ENCODE measurements at regions of chr1 and their contacts with region 1.

Region 1: DNA sequence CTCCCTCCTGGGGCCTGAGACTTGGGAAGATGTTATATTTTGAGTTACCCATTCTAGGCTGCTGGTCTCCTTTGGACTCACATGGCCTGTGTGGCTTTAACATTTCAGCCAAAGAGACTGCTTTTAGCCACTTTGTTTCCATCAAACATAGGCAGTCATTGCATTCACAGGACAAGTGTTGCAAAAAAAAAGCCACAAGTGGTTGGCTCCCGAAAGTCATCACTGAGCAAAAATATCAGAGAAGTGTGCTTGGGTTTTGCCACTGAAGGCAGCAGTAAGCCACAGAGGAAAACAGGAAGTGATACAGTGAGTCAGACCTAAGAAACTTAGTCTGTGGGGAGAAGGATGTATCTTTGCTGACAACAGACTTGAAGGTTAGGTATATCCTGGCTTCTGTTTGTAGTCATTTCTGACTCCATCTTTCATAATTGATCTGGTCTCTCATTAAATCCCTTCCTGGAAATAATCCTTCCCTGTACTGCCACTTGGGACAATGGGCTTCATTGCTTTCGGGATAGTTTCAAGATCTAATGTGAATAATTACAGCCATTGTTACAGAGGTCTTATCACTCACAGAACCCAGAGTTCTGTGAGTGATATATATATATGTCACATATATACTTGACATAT is 80.9 kb downstream of the COLGALT2 start:
- DNase-seq: peak; percentile 72
- H3K4me3 Mint-ChIP-seq: no peak overlapping the region
- H3K27ac Mint-ChIP-seq: no peak overlapping the region
- H3K4me1 Mint-ChIP-seq: peaks cover 17% of the 10 kb centered on the region
- H3K27me3 Mint-ChIP-seq: no peaks in the 10 kb centered on the region

Region 2: GRCh38 chr1:183841950-183842794 is 114.5 kb before region 1 on chr1:
- CTCF ChIA-PET with region 1: no interaction called
- POLR2A ChIA-PET with region 1: no interaction called
- intact Hi-C with region 1: loop called (anchors 1 kb)
- DNase-seq: peak; percentile 51
- H3K4me3 Mint-ChIP-seq: peak overlapping the region; percentile 40
- H3K27ac Mint-ChIP-seq: peak overlapping the region; percentile 66
- H3K4me1 Mint-ChIP-seq: peaks cover 25% of the 10 kb centered on the region
- H3K27me3 Mint-ChIP-seq: no peaks in the 10 kb centered on the region

Region 3: GRCh38 chr1:183989078-183989577 is 32.5 kb after region 1 on chr1:
- CTCF ChIA-PET with region 1: no interaction called
- POLR2A ChIA-PET with region 1: no interaction called
- intact Hi-C with region 1: loop called (anchors 2 kb)
- DNase-seq: peak; percentile 79
- H3K4me3 Mint-ChIP-seq: no peak overlapping the region
- H3K27ac Mint-ChIP-seq: no peak overlapping the region
- H3K4me1 Mint-ChIP-seq: peaks cover 19% of the 10 kb centered on the region
- H3K27me3 Mint-ChIP-seq: no peaks in the 10 kb centered on the region

Region 4: GRCh38 chr1:184025242-184025675 is 68.6 kb after region 1 on chr1:
- CTCF ChIA-PET with region 1: no interaction called
- POLR2A ChIA-PET with region 1: no interaction called
- intact Hi-C with region 1: no loop called
- DNase-seq: no peak
- H3K4me3 Mint-ChIP-seq: no peak overlapping the region
- H3K27ac Mint-ChIP-seq: no peak overlapping the region
- H3K4me1 Mint-ChIP-seq: no peaks in the 10 kb centered on the region
- H3K27me3 Mint-ChIP-seq: peaks cover 21% of the 10 kb centered on the region

Region 5: DNA sequence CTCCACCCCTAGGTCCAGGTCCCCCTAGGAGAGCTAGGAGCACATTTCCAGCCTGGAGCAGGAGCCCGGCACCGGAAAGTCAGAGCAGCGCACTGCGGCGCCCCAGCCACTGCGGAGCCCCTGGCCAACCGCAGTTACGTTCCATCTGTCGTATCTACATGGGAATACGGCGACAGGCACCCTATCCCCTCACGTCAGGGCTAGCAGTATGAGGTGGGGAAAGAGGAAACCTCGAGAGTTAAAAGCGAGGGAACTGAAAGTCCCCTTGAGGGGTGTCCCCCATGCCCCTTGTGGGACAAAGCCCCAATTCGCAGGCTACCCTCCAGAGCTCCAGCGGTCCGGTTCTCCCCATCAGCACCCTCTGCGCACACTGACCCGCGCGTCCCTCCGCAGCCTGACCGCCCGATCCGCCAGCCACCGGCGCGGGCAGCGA is 79.9 kb after region 1 on chr1:
- CTCF ChIA-PET with region 1: no interaction called
- POLR2A ChIA-PET with region 1: no interaction called
- intact Hi-C with region 1: loop called (anchors 2 kb)
- DNase-seq: peak; percentile 23
- H3K4me3 Mint-ChIP-seq: peak overlapping the region; percentile 62
- H3K27ac Mint-ChIP-seq: no peak overlapping the region
- H3K4me1 Mint-ChIP-seq: peaks cover 12% of the 10 kb centered on the region
- H3K27me3 Mint-ChIP-seq: peaks cover 50% of the 10 kb centered on the region

Region 6: DNA sequence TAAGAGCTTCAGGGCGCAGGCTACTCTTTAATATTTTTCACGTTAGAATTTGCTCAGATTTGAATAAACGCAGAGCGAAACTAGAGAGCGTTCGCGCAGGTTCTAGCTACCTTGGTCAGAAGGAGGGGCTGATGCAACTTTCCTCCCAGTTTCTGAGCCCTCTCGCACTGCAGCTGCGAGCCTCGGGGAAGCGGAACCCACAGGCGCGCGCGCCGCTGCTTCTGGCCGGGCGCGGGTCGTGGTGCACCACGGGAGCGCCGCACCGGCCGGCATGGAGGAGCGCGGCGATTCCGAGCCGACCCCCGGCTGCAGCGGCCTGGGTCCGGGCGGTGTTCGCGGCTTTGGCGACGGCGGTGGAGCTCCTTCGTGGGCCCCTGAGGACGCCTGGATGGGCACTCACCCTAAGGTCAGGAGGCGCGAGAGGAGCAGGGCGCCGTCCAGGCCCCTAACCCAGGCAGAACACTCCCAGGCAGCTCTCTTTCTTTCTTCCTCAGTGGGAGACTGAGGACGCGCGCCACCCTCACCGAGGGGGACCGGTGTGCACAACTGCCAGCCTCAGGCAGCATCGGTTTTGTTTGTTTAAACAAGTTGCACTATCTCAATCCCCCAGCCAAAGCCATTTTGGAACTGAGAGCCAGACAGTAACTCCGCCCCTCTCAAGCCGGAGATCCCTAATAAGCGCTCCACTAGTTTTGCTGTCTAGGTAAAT is 95.0 kb after region 1 on chr1 and contains the start of gene TSEN15:
- CTCF ChIA-PET with region 1: no interaction called
- POLR2A ChIA-PET with region 1: no interaction called
- intact Hi-C with region 1: loop called (anchors 1 kb)
- DNase-seq: peak; percentile 85
- H3K4me3 Mint-ChIP-seq: peak within 1 kb of the TSS; percentile 98
- H3K27ac Mint-ChIP-seq: peak within 1 kb of the TSS; percentile 96
- H3K4me1 Mint-ChIP-seq: peaks cover 33% of the 10 kb centered on the region
- H3K27me3 Mint-ChIP-seq: peaks cover 6% of the 10 kb centered on the region
- total RNA-seq, gene TSEN15: 44.1 to 44.3 TPM

Region 7: DNA sequence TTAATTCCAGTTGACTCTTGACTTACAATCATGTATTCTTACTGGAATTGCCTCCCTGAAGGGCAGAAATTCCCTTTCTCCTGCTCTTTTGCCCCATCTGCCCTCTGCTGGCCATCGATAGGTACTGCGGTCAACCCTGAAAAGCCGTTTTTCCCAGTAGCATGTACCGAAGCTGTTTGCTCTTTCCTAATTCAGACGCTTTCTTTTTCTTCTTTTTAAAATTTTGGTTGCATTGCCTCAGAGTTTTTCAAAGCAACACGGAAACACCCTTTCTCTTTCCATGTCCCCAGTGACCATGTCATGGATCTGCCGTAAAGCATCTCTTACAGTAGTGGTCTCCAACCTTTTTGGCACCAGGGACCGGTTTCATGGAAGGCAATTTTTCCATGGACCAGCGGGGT is 266.0 kb after region 1 on chr1:
- CTCF ChIA-PET with region 1: interaction called, 4 read pairs
- POLR2A ChIA-PET with region 1: no interaction called
- intact Hi-C with region 1: loop called (anchors 10 kb)
- DNase-seq: peak; percentile 47
- H3K4me3 Mint-ChIP-seq: no peak overlapping the region
- H3K27ac Mint-ChIP-seq: no peak overlapping the region
- H3K4me1 Mint-ChIP-seq: no peaks in the 10 kb centered on the region
- H3K27me3 Mint-ChIP-seq: no peaks in the 10 kb centered on the region

Measured in activated CD4-positive, alpha-beta memory T cell treated with anti-CD3 and anti-CD28 coated beads for 36 hours (primary cell).